HepG2 (cell line): ENCODE measurements at regions of chr9 and their contacts with region 1.

Region 1: DNA sequence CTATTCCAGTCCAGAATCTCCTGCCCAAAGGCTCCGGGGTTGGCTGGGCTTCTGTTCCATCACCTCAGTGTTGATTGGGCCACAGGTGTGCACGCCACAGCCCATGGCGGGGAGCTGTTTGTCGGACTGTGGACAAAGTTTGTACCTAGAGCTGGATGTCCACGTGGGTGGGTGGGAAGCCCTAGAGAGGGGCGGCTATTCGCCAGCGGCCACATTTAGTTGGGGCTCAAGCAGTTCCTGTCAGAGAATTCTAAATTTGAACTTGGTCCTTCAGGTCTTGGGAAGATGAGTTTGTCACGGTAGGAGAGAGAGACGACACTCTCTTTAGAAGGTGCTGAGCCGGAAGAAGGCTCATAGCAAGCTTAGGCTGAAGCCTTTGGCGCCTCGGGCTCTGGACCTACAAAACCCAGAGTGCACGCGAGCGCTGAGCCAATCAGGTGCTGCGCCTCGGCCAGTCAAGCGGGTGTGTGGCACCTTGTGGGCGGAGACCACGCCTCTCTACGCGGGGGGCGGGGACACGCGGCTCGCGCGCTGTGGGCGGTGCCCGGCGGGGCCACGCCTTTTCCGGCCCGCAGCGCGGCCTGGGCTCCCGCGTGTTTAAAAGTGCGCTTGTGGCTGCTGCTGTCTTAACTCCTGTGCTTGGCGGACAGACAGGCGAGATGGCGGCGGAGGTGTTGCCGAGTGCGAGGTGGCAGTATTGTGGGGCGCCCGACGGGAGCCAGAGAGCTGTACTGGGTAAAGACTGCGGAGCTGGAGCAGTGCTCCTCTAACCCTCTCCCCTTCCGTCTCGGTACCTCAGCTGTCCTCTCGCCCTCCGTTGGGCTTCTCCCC is at the start of gene POLR1E:
- DNase-seq: peak; percentile 92
- ATAC-seq: peak; percentile 95
- H3K4me3 ChIP-seq: peak within 1 kb of the TSS; percentile 79 to 86 (median 82)
- H3K27ac ChIP-seq: peak within 1 kb of the TSS; percentile 84
- H3K4me1 ChIP-seq: peaks cover 52% of the 10 kb centered on the region
- H3K27me3 ChIP-seq: no peaks in the 10 kb centered on the region; a peak in 1 of 5 replicates
- CTCF ChIP-seq: peak; percentile 41
- EP300 ChIP-seq: no peak
- POLR2A ChIP-seq: peak; percentile 88 to 91
- RAD21 ChIP-seq: no peak
- total RNA-seq, gene POLR1E: 37.8 and 49.1 TPM in 2 replicates

Region 2: DNA sequence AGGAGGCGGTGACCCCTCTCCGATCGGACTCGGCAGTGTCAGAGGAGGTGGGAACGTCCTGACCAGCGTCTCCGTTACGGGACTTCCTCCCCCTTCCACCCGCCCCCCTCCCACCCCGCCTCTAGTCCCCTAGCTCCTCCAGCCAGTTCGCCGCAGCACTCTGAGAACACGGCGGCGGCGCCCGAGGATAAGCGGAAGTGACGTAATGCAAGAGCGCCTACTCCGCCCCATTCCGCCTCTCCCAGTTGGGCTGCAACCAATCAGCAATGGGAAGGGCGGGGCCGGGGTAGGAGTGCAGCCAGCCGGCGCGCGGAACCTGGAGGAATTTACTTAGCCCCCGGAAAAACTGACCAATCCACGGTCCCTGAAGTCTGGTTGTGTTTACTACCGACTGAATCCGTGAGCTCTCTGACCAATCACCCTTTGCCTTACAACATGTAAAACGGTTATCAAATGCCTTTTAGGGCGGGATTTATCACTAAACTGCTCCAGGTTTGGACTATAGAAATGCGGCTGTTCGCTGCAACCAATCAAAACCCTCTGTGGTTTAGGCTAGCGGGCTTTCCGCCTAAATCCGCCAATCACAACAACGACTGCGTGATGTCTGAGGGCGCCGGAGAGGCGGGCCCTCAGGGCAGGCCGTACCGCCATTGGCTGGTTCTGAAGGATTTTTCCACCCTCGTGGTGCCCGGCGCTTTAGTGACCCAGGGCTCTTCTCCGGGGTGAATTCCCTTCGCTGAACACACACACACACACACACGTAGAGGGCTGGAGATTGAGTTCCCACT is 20.2 kb before region 1 on chr9 and contains the start of gene ZBTB5:
- CTCF ChIA-PET with region 1: no interaction called
- POLR2A ChIA-PET with region 1: interaction called, 18 read pairs
- in situ Hi-C with region 1: no loop called
- intact Hi-C with region 1: no loop called
- DNase-seq: peak; percentile 100
- ATAC-seq: peak; percentile 87
- H3K4me3 ChIP-seq: peak within 1 kb of the TSS; percentile 79 to 95 (median 87)
- H3K27ac ChIP-seq: peak within 1 kb of the TSS; percentile 95
- H3K4me1 ChIP-seq: peaks cover 36% of the 10 kb centered on the region
- H3K27me3 ChIP-seq: no peaks in the 10 kb centered on the region; a peak in 1 of 5 replicates
- CTCF ChIP-seq: no peak
- EP300 ChIP-seq: peak in 1 of 2 experiments; percentile 4; a peak in 1 of 4 replicates
- POLR2A ChIP-seq: peak; percentile 76 to 84
- RAD21 ChIP-seq: no peak
- total RNA-seq, gene ZBTB5: 12.5 and 15.2 TPM in 2 replicates

Region 3: DNA sequence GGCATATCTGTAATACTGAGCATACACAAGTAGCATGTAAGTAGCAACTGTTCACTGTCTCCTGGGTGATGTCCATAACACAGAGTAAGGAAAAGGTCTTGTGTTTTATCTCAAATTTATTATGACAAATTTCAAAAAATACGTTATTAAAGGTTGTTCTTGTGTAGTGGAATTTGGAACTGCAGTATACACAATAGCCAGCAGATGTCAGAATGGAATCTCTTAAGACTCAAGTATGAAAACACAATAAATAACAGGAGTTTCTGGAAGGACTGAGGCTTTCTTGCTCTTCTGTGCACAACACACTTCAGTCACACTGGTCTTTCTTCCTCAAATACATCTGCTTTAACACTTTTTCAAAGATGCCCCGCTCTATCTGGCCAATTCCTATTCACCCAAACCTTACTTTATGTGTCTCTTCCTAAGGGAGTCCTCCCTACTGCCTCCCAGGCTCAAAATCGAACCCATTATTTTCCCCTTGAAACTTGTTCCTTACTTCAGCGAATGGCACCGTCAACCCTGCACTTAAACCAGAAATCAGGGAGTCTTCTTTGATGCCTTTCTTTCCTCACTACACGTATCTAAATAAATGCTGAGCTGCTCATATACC is 97.0 kb after region 1 on chr9:
- CTCF ChIA-PET with region 1: interaction called, 3 read pairs
- POLR2A ChIA-PET with region 1: no interaction called
- in situ Hi-C with region 1: no loop called
- intact Hi-C with region 1: loop called (anchors 5 kb)
- DNase-seq: peak; percentile 40
- ATAC-seq: peak; percentile 56; the same call in 2 of the 3 replicates
- H3K4me3 ChIP-seq: no peak overlapping the region
- H3K27ac ChIP-seq: peak overlapping the region; percentile 14
- H3K4me1 ChIP-seq: no peaks in the 10 kb centered on the region
- H3K27me3 ChIP-seq: no peaks in the 10 kb centered on the region
- CTCF ChIP-seq: peak; percentile 48
- EP300 ChIP-seq: no peak
- POLR2A ChIP-seq: no peak; a peak in 1 of 4 replicates
- RAD21 ChIP-seq: peak; percentile 22; the same call in 1 of the 2 replicates

Region 4: GRCh38 chr9:37650873-37651768 is 165.5 kb after region 1 on chr9 and contains the start of gene FRMPD1:
- CTCF ChIA-PET with region 1: no interaction called
- POLR2A ChIA-PET with region 1: no interaction called
- in situ Hi-C with region 1: no loop called
- intact Hi-C with region 1: loop called (anchors 1 kb)
- DNase-seq: peak; percentile 17
- ATAC-seq: peak; percentile 98
- H3K4me3 ChIP-seq: peak within 1 kb of the TSS; percentile 63 to 74 (median 68)
- H3K27ac ChIP-seq: no peak within 1 kb of the TSS
- H3K4me1 ChIP-seq: peaks cover 10% of the 10 kb centered on the region
- H3K27me3 ChIP-seq: peaks cover 11 to 86% of the 10 kb centered on the region in 2 experiments
- CTCF ChIP-seq: 0 out of 2 replicates have a peak, but pooled peaks have one; percentile 7
- EP300 ChIP-seq: no peak
- POLR2A ChIP-seq: no peak
- RAD21 ChIP-seq: no peak
- total RNA-seq, gene FRMPD1: not detected in 2 replicates

Region 5: DNA sequence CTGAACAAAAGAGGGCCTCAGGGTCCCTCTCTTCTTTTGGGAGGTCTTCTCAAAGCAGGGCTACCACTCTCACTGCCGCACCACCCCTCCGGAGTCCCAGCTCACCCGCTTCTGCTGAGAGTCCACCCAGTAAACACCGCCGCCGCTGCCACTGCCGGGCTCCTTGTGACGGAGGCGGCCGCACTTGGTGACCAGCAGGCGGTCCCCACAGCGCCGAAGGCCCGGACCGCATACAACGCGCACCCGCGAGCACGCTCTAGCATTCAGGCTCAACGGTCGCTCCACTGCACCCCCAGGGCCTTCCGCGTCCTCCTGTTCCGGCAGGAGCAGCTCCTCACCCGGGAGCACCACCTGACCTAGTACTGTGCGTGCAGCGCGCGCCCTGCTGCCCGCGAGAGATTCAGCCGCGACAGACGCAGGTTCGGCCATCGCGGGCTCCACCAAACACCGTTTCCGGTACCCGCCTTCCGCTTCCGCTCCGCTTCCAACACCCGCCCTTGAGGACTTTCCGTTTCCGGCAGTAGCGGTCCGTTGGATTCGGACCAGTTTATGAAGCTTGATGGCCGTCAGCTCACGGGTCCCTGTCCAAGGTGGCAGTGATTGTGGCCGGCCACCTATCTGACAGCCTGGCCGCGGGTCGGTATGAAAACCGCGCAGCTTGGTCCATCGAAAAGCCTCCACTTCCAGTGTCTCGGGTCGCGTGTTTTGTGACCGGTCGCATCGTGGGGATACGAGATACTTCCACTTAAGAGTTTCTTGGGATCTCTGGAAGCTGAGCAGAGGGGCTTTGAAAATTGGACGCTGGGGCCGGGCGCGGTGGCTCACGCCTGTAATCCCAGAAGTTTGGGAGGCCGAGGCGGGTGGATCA is 299.2 kb after region 1 on chr9 and contains the start of gene EXOSC3:
- CTCF ChIA-PET with region 1: no interaction called
- POLR2A ChIA-PET with region 1: interaction called, 10 read pairs
- in situ Hi-C with region 1: loop called (anchors 10 kb)
- intact Hi-C with region 1: loop called (anchors 10 kb)
- DNase-seq: peak; percentile 92
- ATAC-seq: peak; percentile 96
- H3K4me3 ChIP-seq: peak within 1 kb of the TSS; percentile 81 to 95 (median 95)
- H3K27ac ChIP-seq: peak within 1 kb of the TSS; percentile 87
- H3K4me1 ChIP-seq: peaks cover 40% of the 10 kb centered on the region
- H3K27me3 ChIP-seq: no peaks in the 10 kb centered on the region
- CTCF ChIP-seq: peak; percentile 59
- EP300 ChIP-seq: peak in 1 of 2 experiments; percentile 27; a peak in 1 of 4 replicates
- POLR2A ChIP-seq: peak; percentile 95 to 96
- RAD21 ChIP-seq: no peak; the same call in 1 of the 2 replicates
- total RNA-seq, gene EXOSC3: 68.7 and 98.1 TPM in 2 replicates

Region 6: DNA sequence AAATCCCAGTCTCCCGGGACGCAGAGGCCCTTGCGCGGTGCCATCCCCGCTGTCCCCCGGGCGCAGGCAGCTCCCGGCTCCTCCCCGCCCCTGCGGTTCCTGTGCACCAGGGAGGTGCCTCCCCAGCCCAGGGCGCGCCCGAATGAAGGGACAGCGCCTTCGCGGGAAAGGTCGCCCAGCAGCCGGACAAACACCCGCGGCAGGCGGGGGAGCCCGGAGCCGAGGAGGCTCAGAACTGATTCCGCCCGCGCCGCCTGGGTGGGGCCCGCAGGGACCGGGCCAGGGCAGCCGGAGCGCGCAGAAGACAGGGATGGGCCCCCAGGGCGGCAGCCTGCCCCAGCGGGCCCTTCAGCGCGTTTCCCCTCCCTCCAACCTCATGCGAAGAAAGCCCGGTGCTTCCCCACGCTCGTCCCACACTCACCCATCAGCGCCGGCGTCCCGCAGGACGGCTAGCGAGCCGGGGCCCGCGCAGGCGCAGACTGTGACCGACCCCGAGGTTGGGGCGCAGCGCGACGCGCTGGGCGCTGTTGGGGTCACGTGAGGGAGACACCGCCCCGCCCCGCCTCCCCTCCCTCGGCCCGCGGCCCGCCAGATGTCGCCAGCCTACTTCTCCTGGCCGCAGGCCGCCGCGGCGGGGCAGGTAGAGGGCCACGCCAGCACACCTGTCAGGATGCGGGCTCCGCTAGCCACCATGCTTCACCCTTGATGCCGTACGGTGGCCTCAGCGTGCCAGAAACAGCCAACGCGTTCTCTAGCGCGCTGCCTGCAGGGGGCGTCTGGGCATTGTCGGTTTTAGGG is 418.2 kb after region 1 on chr9 and contains the start of gene SLC25A51:
- CTCF ChIA-PET with region 1: no interaction called
- POLR2A ChIA-PET with region 1: interaction called, 10 read pairs
- in situ Hi-C with region 1: loop called (anchors 25 kb)
- intact Hi-C with region 1: loop called (anchors 5 kb)
- DNase-seq: peak; percentile 88
- ATAC-seq: peak; percentile 76
- H3K4me3 ChIP-seq: peak within 1 kb of the TSS; percentile 77 to 94 (median 90)
- H3K27ac ChIP-seq: peak within 1 kb of the TSS; percentile 72
- H3K4me1 ChIP-seq: peaks cover 53% of the 10 kb centered on the region
- H3K27me3 ChIP-seq: no peaks in the 10 kb centered on the region; a peak in 1 of 5 replicates
- CTCF ChIP-seq: peak; percentile 99
- EP300 ChIP-seq: peak in 1 of 2 experiments; percentile 28; a peak in 1 of 4 replicates
- POLR2A ChIP-seq: peak; percentile 25 to 71; a peak in 3 of 4 replicates
- RAD21 ChIP-seq: peak; percentile 75; the same call in 1 of the 2 replicates
- total RNA-seq, gene SLC25A51: 37.7 and 40.7 TPM in 2 replicates

Region 7: DNA sequence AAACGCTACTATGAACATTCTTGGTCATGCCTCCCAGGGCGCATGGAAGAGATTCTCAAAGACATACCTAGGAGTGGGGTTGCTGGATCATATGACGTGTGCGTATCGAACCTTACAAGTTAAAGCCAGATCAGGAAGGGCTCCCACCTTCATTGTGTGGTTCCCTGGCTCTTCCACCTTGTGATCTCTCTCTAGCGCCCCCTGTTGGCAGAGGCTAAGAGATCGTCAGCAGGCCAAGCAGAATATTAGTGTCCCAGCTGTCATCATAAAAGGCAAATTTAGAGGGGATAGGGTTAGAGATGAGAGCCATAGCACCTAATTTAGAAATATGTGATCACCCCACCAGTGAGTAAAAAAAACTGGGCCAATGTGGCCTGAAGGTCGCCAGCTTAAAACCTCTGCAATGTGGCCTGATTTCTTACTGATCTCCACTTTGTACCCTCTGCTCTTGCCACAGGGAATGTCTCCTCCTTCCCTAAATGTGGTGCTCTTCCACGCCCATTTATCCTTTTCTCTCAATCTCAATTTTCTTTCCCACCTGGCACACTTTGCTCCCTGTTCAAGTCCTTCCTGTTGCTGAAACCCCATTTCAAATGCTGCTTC is 675.1 kb after region 1 on chr9:
- CTCF ChIA-PET with region 1: no interaction called
- POLR2A ChIA-PET with region 1: no interaction called
- in situ Hi-C with region 1: no loop called
- intact Hi-C with region 1: loop called (anchors 5 kb)
- DNase-seq: peak; percentile 57
- ATAC-seq: peak; percentile 86
- H3K4me3 ChIP-seq: no peak overlapping the region
- H3K27ac ChIP-seq: no peak overlapping the region
- H3K4me1 ChIP-seq: no peaks in the 10 kb centered on the region
- H3K27me3 ChIP-seq: peaks cover 0 to 11% of the 10 kb centered on the region in 2 experiments; a peak in 2 of 5 replicates
- CTCF ChIP-seq: peak; percentile 84
- EP300 ChIP-seq: no peak
- POLR2A ChIP-seq: no peak
- RAD21 ChIP-seq: peak; percentile 22